Stomach (tissue), 19 donors: ENCODE measurements at regions of chr2 and their contacts with region 1.

Region 1: DNA sequence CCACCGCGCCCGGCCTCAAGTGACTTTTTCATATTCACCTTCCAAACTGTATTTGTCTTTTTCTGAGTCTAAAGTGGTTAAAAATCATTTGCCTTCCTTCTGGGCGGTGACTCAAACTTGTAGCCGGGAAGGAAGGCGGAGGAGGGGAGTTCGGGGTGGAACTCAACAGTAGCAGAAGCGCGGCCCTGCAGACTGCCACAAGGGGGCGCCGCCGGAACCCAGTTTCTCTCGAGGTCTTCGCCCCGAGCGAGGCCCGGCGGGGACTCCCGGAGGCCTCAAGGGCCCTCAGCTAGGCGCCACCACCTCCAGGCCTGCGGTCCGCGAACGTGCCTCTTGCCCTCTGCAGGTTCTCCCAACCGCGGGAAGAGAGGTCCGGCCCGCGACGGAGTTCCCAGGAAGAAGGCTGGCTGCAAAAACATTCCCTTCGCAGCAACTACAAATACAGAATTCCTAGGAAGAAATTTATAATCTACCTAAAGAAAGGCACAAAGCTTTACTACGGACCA is 16.8 kb upstream of the ITM2C start:
- DNase-seq: peak; percentile 92 to 94
- H3K4me3 ChIP-seq: no peak overlapping the region
- H3K27ac ChIP-seq: peak overlapping the region in 1 of 5 donors; percentile 22
- H3K4me1 ChIP-seq: peaks cover 0 to 9% (median 7%) of the 10 kb centered on the region in 4 donors
- H3K27me3 ChIP-seq: peaks cover 0 to 25% (median 5%) of the 10 kb centered on the region in 3 donors
- CTCF ChIP-seq: peak in 5 of 7 experiments; percentile 80 to 92 (median 89)
- EP300 ChIP-seq: no peak
- POLR2A ChIP-seq: no peak

Region 2: DNA sequence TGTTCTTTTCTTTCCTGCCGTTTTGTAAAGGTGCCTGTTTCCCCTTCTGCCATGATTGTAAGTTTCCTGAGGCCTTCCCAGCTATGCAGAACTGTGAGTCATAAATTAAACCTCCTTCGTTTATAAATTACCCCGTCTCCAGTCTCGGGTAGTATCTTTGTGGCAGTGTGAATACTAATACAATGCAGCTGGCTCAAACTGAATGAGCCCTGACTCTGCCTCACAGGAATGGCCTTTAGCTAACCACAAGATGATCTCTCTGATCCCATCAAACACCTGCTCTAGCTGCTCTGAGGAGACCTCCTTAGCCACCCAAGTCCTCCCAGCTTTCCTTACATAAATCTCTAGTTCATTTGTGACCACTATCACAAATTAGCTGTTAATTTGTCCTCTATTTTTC is 176.8 kb before region 1 on chr2:
- intact Hi-C with region 1: no loop called
- DNase-seq: no peak
- H3K4me3 ChIP-seq: no peak overlapping the region
- H3K27ac ChIP-seq: no peak overlapping the region
- H3K4me1 ChIP-seq: peaks cover 0 to 30% (median 11%) of the 10 kb centered on the region in 4 donors
- H3K27me3 ChIP-seq: no peaks in the 10 kb centered on the region
- CTCF ChIP-seq: no peak
- EP300 ChIP-seq: no peak
- POLR2A ChIP-seq: no peak

Region 3: GRCh38 chr2:230913406-230914143 is 65.6 kb after region 1 on chr2:
- intact Hi-C with region 1: loop called (anchors 10 kb)
- DNase-seq: peak; percentile 47 to 78
- H3K4me3 ChIP-seq: no peak overlapping the region
- H3K27ac ChIP-seq: no peak overlapping the region
- H3K4me1 ChIP-seq: no peaks in the 10 kb centered on the region
- H3K27me3 ChIP-seq: peaks cover 0 to 13% (median 0%) of the 10 kb centered on the region in 3 donors
- CTCF ChIP-seq: peak in 4 of 7 experiments; percentile 32 to 47 (median 41)
- EP300 ChIP-seq: no peak
- POLR2A ChIP-seq: no peak

Region 4: GRCh38 chr2:231104115-231104713 is 256.3 kb after region 1 on chr2:
- intact Hi-C with region 1: no loop called
- DNase-seq: peak; percentile 54 to 87
- H3K4me3 ChIP-seq: no peak overlapping the region
- H3K27ac ChIP-seq: peak overlapping the region in 3 of 5 donors; percentile 11 to 58 (median 53)
- H3K4me1 ChIP-seq: peaks cover 0 to 47% (median 14%) of the 10 kb centered on the region in 4 donors
- H3K27me3 ChIP-seq: no peaks in the 10 kb centered on the region
- CTCF ChIP-seq: peak in 4 of 7 experiments; percentile 69 to 83 (median 75)
- EP300 ChIP-seq: no peak
- POLR2A ChIP-seq: no peak

Region 5: GRCh38 chr2:231321556-231322334 is 473.8 kb after region 1 on chr2:
- intact Hi-C with region 1: no loop called
- DNase-seq: peak; percentile 20 to 36
- H3K4me3 ChIP-seq: no peak overlapping the region
- H3K27ac ChIP-seq: peak overlapping the region in 2 of 5 donors; percentile 3 to 11
- H3K4me1 ChIP-seq: peaks cover 0 to 3% (median 0%) of the 10 kb centered on the region in 4 donors
- H3K27me3 ChIP-seq: no peaks in the 10 kb centered on the region
- CTCF ChIP-seq: no peak
- EP300 ChIP-seq: no peak
- POLR2A ChIP-seq: no peak